ENCODE measurements at regions of chr7 and their contacts with region 1.

Region 1: GRCh38 chr7:140175221-140176121 is 1.3 kb downstream of the KDM7A start:
- DNase-seq: peak; percentile 93 to 96 (median 95)
- ATAC-seq: peak; percentile 79 to 83
- H3K4me3 ChIP-seq: peak overlapping the region; percentile 98
- H3K27ac ChIP-seq: peak overlapping the region; percentile 93
- H3K4me1 ChIP-seq: peaks cover 2% of the 10 kb centered on the region
- H3K27me3 ChIP-seq: no peaks in the 10 kb centered on the region

Region 2: DNA sequence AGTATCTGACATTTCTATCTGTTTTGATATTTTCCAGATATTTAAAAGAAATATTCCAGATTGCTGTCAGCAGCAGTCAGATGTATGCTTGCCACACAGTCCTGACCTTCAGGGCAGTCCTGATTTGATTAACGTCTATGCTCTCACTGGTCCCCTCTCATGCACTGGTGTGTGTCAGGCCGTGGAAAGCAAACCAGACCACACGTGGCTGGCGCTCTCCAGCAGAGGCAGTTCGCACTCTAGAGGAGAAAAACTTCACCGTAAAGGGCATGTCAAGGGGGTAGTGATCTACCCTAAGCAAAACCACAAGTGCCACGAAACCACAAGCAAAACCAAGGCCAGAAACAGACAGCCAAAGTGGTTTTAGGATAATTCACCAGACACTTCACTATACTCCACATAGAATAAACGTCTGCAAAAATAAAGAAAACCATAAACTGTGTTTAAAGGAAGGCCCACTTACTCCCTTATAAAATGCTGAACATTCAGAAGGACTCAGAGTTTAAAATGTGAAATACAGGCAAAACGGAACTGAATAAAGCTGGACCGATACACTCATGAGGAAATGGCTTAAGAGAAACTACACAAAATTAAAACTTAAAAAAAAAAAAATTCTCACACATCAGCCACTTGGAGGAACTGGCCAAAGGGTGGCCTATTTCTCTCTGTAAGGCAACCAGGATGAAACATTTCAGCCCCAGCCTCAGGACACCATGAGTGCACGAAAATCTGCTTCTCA is 139.1 kb before region 1 on chr7:
- intact Hi-C with region 1: no loop called
- DNase-seq: no peak
- ATAC-seq: no peak
- H3K4me3 ChIP-seq: no peak overlapping the region
- H3K27ac ChIP-seq: no peak overlapping the region
- H3K4me1 ChIP-seq: peaks cover 2% of the 10 kb centered on the region
- H3K27me3 ChIP-seq: no peaks in the 10 kb centered on the region

Region 3: GRCh38 chr7:140316165-140316661 is 140.7 kb after region 1 on chr7:
- intact Hi-C with region 1: loop called in 1 of 4 experiments (anchors 5 kb)
- DNase-seq: peak; percentile 80 to 84 (median 81)
- ATAC-seq: peak; percentile 92 to 97
- H3K4me3 ChIP-seq: no peak overlapping the region
- H3K27ac ChIP-seq: peak overlapping the region; percentile 53
- H3K4me1 ChIP-seq: no peaks in the 10 kb centered on the region
- H3K27me3 ChIP-seq: no peaks in the 10 kb centered on the region

Region 4: GRCh38 chr7:140326116-140326928 is 150.9 kb after region 1 on chr7:
- intact Hi-C with region 1: loop called in 3 of 4 experiments (anchors 5 to 10 kb)
- DNase-seq: peak; percentile 53 to 80 (median 62)
- ATAC-seq: peak; percentile 84 to 88
- H3K4me3 ChIP-seq: no peak overlapping the region
- H3K27ac ChIP-seq: no peak overlapping the region
- H3K4me1 ChIP-seq: peaks cover 5% of the 10 kb centered on the region
- H3K27me3 ChIP-seq: no peaks in the 10 kb centered on the region

Measured in right cardiac atrium (tissue), 5 donors.